Psoas muscle (tissue), 8 donors: ENCODE measurements at regions of chr10 and their contacts with region 1.

Region 1: DNA sequence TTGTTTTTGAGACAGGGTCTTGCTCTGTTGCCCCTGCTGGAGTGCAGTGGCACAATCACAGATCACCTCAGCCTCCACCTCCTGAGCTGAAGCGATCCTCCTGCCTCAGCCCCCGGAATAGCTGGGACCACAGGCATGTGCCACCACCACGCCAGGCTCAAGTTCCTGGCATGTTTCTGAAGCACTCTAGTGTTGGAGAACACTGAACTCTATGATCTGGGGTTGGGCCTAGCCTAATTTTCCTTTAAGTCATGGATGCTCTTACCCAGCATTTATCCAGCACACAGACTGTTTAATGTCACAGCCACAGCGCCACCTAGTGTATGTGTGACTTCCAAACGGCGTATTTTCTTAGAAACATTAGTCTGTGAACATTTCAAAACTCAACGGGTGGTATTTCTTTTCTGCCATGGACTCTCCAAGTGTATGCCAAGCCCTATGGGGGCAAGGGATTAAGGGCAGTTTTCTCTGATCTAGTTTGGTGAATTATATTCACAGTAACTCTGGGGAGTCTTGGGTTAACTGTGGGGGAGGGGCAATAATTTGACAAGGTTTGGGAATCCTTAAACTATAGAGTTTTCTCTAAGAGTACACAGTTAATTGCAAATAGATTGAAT is 91.8 kb downstream of the CREM start:
- DNase-seq: peak; percentile 78 to 85
- ATAC-seq: peak; percentile 74 to 85 (median 78)
- H3K4me3 ChIP-seq: peak overlapping the region; percentile 8
- H3K27ac ChIP-seq: peak overlapping the region; percentile 60
- H3K4me1 ChIP-seq: peaks cover 34% of the 10 kb centered on the region
- H3K27me3 ChIP-seq: no peaks in the 10 kb centered on the region
- CTCF ChIP-seq: peak; percentile 83

Region 2: GRCh38 chr10:34994565-34995142 is 223.8 kb before region 1 on chr10:
- intact Hi-C with region 1: loop called in 1 of 2 experiments (anchors 10 kb)
- DNase-seq: no peak
- ATAC-seq: peak; percentile 24 to 58 (median 46)
- H3K4me3 ChIP-seq: no peak overlapping the region
- H3K27ac ChIP-seq: no peak overlapping the region
- H3K4me1 ChIP-seq: no peaks in the 10 kb centered on the region
- H3K27me3 ChIP-seq: no peaks in the 10 kb centered on the region
- CTCF ChIP-seq: peak; percentile 52

Region 3: GRCh38 chr10:35203744-35204143 is 14.7 kb before region 1 on chr10:
- intact Hi-C with region 1: no loop called
- DNase-seq: no peak
- ATAC-seq: peak in 2 of 4 donors; percentile 41 to 78
- H3K4me3 ChIP-seq: no peak overlapping the region
- H3K27ac ChIP-seq: peak overlapping the region; percentile 37
- H3K4me1 ChIP-seq: peaks cover 10% of the 10 kb centered on the region
- H3K27me3 ChIP-seq: no peaks in the 10 kb centered on the region
- CTCF ChIP-seq: no peak

Region 4: GRCh38 chr10:35421553-35422178 is 203.2 kb after region 1 on chr10:
- intact Hi-C with region 1: no loop called
- DNase-seq: no peak
- ATAC-seq: peak; percentile 75 to 87 (median 84)
- H3K4me3 ChIP-seq: peak overlapping the region; percentile 13
- H3K27ac ChIP-seq: peak overlapping the region; percentile 81
- H3K4me1 ChIP-seq: peaks cover 72% of the 10 kb centered on the region
- H3K27me3 ChIP-seq: no peaks in the 10 kb centered on the region
- CTCF ChIP-seq: no peak

Region 5: DNA sequence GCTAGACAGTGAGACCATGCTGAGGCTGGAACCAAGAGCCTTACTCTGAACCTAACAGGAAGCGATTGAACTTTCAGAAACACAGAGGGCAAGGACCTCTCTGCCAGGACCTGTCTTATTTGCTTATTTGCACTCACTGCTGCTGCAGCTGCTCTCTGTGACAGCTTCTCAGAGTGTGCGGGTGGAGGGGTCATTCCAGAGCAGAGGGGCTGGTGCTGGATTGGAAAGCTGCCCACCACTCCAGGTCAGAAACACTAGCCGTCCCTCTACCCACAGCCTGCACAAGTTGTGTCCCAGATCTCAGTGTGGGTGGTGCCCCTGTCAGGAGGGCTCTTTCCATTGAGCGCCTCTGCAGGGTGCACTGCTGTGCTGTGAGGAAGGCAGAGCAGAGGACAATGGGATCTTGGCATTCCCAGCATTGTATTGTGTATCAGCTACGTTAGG is 244.1 kb after region 1 on chr10:
- intact Hi-C with region 1: no loop called
- DNase-seq: no peak
- ATAC-seq: peak; percentile 50 to 62 (median 53)
- H3K4me3 ChIP-seq: no peak overlapping the region
- H3K27ac ChIP-seq: peak overlapping the region; percentile 27
- H3K4me1 ChIP-seq: peaks cover 79% of the 10 kb centered on the region
- H3K27me3 ChIP-seq: no peaks in the 10 kb centered on the region
- CTCF ChIP-seq: no peak